ENCODE measurements at regions of chr6 and their contacts with region 1.

Region 1: DNA sequence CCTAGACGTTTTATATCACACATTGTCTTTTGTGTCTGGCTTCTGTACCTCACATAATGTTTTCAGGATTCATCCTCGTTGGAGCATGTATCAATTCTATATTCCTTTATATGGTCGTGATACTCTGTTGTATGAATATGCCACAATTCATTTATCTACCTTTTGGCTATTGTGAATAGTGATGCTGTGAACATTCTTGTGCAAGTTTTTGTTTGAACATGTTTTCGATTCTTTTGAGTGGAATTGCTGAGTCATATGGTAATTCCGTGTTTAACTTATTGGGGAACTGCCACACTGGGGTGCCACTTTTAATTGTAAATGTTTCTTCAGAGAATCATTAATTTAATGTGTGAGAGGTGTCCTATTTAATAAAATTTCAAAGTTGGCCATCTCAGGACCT is 101.2 kb downstream of the SLC35B3 start:
- DNase-seq: no peak
- H3K4me3 ChIP-seq: no peak overlapping the region
- H3K27ac ChIP-seq: peak overlapping the region; percentile 1
- H3K4me1 ChIP-seq: peaks cover 16% of the 10 kb centered on the region
- H3K27me3 ChIP-seq: no peaks in the 10 kb centered on the region
- CTCF ChIP-seq: no peak

Region 2: GRCh38 chr6:7559658-7560385 is 774.3 kb before region 1 on chr6:
- CTCF ChIA-PET with region 1: no interaction called
- POLR2A ChIA-PET with region 1: no interaction called
- intact Hi-C with region 1: no loop called
- DNase-seq: no peak
- H3K4me3 ChIP-seq: no peak overlapping the region
- H3K27ac ChIP-seq: no peak overlapping the region
- H3K4me1 ChIP-seq: no peaks in the 10 kb centered on the region
- H3K27me3 ChIP-seq: peaks cover 2% of the 10 kb centered on the region
- CTCF ChIP-seq: no peak

Region 3: DNA sequence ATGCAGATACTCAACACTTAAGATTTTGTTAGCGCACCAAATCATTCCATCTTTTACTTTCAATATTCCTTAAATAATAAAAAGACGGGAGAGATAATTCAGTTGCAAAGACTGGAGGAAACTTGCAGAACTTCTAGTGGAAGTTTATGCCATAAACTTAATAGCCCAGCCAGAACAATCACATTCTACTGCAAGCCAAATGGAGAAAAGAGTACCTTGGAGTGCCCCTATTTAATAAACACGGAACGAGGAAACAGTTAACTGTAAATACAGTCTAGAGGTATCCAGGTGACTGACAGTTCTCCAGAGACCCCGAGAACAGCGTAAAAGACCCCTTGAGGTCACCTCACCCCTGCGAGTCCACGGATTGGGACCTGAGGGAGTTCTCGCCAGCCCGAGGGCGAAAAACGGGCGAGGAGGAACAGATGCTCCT is 100.6 kb after region 1 on chr6:
- CTCF ChIA-PET with region 1: no interaction called
- POLR2A ChIA-PET with region 1: no interaction called
- intact Hi-C with region 1: loop called (anchors 5 kb)
- DNase-seq: no peak
- H3K4me3 ChIP-seq: peak overlapping the region; percentile 86
- H3K27ac ChIP-seq: peak overlapping the region; percentile 79
- H3K4me1 ChIP-seq: peaks cover 20% of the 10 kb centered on the region
- H3K27me3 ChIP-seq: no peaks in the 10 kb centered on the region
- CTCF ChIP-seq: no peak

Measured in A673 (cell line).